ENCODE measurements at regions of chr15 and their contacts with region 1.

Region 1: DNA sequence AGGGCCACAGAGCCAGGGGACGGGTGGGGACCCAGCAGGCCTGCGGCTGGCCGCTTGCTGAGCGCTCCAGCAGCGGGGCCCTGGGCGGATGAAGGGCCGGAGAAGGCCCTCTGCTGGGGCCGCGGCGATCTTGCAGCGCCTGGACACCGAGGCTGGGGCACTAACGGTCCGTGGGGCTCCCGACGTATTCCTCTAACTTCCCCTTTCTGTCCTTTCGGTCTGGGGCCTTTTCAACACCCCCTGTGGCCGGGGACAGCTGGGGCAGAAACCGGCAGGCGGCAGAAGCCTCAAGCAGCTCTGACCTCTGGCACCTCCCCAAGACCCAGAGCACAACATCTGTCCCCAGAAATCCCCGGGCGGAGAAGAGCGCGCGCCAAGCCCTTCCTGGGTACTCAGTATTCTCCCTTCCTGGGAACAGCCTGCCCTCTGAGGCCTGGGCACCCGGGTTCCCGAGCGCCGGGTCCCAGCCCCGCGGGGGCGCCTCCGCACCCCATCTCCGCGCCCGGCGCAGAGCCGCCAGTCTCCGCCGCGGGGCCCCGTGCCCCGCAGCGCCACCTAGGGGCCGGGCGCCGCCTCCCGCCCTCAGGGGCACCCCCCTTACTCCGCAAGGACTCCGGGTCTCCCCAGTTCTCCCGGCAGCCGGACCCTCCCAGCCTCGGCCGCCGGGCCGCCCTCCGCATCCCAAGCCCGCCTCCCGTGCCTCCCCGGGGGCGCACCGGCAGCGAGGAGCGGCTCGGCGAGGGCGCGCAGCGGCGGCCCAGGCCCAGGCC is 582 bp upstream of the SLCO3A1 start:
- DNase-seq: peak; percentile 91
- H3K4me3 ChIP-seq: peak overlapping the region; percentile 80 to 93
- H3K27ac ChIP-seq: peak overlapping the region; percentile 73 to 81
- H3K4me1 ChIP-seq: peaks cover 19 to 20% of the 10 kb centered on the region in 2 experiments
- H3K27me3 ChIP-seq: no peaks in the 10 kb centered on the region
- CTCF ChIP-seq: peak; percentile 76
- EP300 ChIP-seq: no peak
- RAD21 ChIP-seq: peak; percentile 66

Region 2: GRCh38 chr15:91302588-91303439 is 550.1 kb before region 1 on chr15:
- CTCF ChIA-PET with region 1: interaction called, 37 read pairs
- POLR2A ChIA-PET with region 1: no interaction called
- DNase-seq: peak; percentile 83
- H3K4me3 ChIP-seq: peak overlapping the region in 1 of 2 experiments; percentile 16; a peak in 1 of 4 replicates
- H3K27ac ChIP-seq: no peak overlapping the region
- H3K4me1 ChIP-seq: peaks cover 0 to 4% of the 10 kb centered on the region in 2 experiments; a peak in 3 of 4 replicates
- H3K27me3 ChIP-seq: peaks cover 10% of the 10 kb centered on the region
- CTCF ChIP-seq: peak; percentile 80
- EP300 ChIP-seq: no peak
- RAD21 ChIP-seq: peak; percentile 99

Region 3: DNA sequence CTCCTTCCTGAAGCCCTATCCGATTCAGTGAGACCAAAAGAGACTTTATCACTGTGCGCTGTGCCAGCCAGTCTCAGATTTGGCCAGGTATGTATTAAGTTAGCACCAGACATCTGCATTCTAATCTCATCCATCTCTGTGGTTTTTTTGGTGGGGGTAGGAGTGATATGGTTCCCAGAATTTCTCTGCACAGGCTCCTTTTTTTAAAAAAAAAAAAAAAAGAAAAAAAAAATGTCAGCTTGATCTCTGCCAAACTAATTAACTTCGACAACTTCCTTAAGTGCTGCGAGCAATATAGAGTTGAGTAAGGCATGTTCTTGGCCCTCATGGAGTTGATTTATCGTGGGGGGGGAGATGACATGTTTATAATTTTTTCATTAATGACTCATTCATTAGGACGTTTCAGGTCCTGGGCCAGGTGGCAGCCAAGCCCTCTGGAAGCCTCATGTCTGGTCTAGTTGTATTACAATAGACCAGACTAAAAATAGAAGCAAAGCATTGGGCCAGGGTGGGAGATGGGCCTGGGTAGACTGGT is 13.5 kb after region 1 on chr15:
- CTCF ChIA-PET with region 1: interaction called, 14 read pairs
- POLR2A ChIA-PET with region 1: interaction called, 3 read pairs
- DNase-seq: peak; percentile 29
- H3K4me3 ChIP-seq: no peak overlapping the region
- H3K27ac ChIP-seq: peak overlapping the region; percentile 72 to 94
- H3K4me1 ChIP-seq: peaks cover 25 to 29% of the 10 kb centered on the region in 2 experiments
- H3K27me3 ChIP-seq: no peaks in the 10 kb centered on the region
- CTCF ChIP-seq: no peak
- EP300 ChIP-seq: peak; percentile 26 to 57; a peak in 2 of 4 replicates
- RAD21 ChIP-seq: no peak

Region 4: DNA sequence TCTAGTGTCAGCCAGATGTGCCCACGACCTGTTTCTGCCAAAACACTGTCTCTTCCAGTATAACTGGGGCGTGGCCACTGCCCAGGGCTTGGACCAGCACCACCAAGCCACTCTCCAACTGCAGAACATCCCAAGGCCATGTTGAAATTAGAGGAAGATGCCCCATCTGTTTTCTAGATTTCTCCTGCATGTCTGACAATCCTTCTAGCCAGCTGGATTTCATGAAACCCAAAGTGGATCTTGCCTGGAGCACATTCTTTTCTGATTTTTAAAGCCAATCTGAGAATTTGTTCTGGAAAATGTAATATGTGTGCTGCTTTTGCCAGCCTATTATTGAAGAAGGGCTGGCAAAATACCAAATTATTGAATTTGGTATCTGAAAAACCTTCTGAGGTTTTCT is 183.0 kb after region 1 on chr15:
- CTCF ChIA-PET with region 1: no interaction called
- POLR2A ChIA-PET with region 1: no interaction called
- DNase-seq: no peak
- H3K4me3 ChIP-seq: no peak overlapping the region
- H3K27ac ChIP-seq: no peak overlapping the region
- H3K4me1 ChIP-seq: peaks cover 0 to 2% of the 10 kb centered on the region in 2 experiments; a peak in 1 of 4 replicates
- H3K27me3 ChIP-seq: no peaks in the 10 kb centered on the region
- CTCF ChIP-seq: no peak
- EP300 ChIP-seq: no peak
- RAD21 ChIP-seq: no peak

Region 5: GRCh38 chr15:92059056-92059960 is 206.4 kb after region 1 on chr15:
- CTCF ChIA-PET with region 1: no interaction called
- POLR2A ChIA-PET with region 1: no interaction called
- DNase-seq: peak; percentile 67
- H3K4me3 ChIP-seq: no peak overlapping the region
- H3K27ac ChIP-seq: no peak overlapping the region
- H3K4me1 ChIP-seq: peaks cover 0 to 10% of the 10 kb centered on the region in 2 experiments; a peak in 1 of 4 replicates
- H3K27me3 ChIP-seq: no peaks in the 10 kb centered on the region
- CTCF ChIP-seq: no peak
- EP300 ChIP-seq: no peak
- RAD21 ChIP-seq: no peak